Right ventricle myocardium superior (tissue), 1 donor: ENCODE measurements at regions of chr6 and their contacts with region 1.

Region 1: GRCh38 chr6:149648148-149649145 is at the start of gene KATNA1:
- DNase-seq: peak; percentile 92
- ATAC-seq: peak; percentile 99
- total RNA-seq, gene KATNA1: 12.0 TPM

Region 2: GRCh38 chr6:149335924-149336608 is 312.4 kb before region 1 on chr6:
- intact Hi-C with region 1: no loop called
- DNase-seq: no peak
- ATAC-seq: no peak

Region 3: DNA sequence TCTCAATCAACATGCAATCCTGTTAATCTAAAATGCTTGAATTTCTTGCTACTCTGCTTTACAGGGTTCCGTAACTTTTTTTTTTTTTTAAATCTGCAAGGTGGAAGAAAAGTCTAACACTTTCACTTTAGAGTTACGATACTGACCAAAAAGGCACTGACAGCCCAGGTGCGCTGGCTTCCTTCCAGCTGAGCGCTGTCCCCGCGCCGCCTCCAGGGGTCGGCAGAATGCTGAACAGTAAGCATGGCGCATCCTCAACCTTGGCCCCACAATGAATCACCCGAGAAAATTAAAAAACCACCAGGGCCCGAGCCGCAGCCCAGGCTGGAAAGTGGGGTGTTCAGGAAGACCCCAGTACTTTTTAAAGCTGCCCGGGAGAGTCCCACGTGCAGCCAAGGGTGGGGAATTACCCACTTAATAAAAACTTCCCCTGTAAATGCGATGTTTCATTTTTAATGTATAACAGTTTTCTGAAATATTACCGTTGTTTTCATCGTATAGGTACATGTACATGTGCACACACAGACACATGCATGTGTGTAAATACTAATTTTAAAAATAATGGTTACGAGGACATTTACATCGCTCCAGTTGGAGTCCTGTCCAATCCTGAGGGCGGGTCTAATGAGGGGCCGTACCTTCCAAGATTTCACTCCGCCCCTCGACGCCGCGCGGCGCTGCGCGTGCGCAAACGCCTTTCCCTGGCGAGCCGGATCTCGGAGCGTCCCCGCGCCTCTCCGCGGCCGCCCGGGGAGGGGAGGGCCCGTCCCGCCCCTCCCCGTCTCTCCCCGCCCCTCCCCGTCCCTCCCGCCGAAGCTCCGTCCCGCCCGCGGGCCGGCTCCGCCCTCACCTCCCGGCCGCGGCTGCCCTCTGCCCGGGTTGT is 82.7 kb before region 1 on chr6 and contains the start of gene GINM1:
- intact Hi-C with region 1: loop called (anchors 5 kb)
- DNase-seq: peak; percentile 96
- ATAC-seq: peak; percentile 98
- total RNA-seq, gene GINM1: 47.9 TPM